G401 (cell line): ENCODE measurements at regions of chr11 and their contacts with region 1.

Region 1: DNA sequence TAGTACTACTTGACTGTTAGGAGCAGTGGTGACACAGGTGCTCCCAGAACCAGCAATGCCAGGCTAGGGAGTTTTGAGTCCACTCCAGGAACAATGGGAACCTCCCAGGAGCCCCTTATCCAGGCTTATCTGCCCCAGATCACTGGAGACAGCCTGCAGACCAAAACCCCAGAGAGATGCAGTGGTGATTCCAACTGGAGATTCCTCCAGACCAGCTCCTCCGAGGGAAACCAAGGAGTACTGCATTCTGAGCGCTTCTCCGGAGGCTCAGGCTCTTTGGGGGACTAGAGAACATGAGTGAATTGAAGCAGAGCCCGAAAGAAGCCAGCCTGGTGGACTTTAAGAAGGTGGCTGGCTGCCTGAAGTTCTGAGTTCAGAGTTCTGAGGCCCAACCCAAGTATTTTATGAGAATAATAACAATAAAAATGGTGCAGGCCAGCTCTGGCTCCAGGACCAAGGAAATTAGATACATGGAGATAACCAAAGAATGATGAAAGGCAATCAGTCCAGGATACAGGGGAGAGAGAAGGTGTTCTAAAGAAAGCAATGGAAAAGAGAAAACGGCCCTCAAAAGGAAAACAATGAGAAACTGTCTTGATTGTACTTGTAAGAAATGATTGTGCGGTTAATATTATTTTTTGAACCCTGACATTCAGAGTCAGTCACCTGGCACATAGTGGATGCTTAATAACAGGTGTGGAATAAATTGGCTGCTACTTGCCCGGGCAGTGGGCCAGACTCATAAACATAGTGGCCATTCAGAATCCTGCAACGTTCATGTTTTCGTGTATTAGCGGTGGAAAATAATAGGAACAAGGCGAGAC is 1.2 kb upstream of the TMEM25 start:
- DNase-seq: peak; percentile 73

Region 2: GRCh38 chr11:118574636-118575035 is 44.8 kb after region 1 on chr11:
- in situ Hi-C with region 1: loop called (anchors 5 kb)
- DNase-seq: no peak